ENCODE measurements at regions of chr3 and their contacts with region 1.

Region 1: GRCh38 chr3:194930377-194931204 is 244.9 kb downstream of the FAM43A start:
- DNase-seq: no peak

Region 2: DNA sequence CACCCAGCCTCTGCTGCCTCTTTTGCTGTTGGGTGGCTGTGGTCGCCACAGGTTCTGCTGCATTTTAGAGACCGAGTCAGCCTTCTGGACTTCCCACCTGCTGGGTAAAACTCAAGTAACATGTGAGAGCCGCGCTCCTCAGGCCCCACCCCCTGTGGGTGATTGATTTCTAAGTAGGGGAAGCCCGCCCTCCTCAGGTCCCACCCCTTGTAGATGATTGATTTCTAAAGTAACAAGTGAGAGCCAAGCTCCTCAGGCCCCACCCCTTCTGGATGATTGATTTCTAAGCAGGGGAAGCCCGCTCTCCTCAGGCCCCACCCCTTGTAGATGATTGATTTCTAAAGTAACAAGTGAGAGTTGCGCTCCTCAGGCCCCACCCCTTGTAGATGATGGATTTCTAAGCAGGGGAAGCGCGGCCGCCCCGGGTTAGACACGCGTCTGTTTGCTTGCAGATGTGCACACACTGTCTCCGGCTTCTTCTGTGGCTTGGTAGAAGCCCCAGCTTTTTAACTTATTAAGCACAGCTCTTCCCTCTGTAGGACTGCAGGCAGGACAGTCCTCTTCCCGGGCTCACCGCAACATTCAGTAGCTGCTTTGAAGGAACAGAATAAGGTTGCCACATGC is 161.5 kb before region 1 on chr3:
- intact Hi-C with region 1: loop called (anchors 5 kb)
- DNase-seq: peak; percentile 92

Region 3: DNA sequence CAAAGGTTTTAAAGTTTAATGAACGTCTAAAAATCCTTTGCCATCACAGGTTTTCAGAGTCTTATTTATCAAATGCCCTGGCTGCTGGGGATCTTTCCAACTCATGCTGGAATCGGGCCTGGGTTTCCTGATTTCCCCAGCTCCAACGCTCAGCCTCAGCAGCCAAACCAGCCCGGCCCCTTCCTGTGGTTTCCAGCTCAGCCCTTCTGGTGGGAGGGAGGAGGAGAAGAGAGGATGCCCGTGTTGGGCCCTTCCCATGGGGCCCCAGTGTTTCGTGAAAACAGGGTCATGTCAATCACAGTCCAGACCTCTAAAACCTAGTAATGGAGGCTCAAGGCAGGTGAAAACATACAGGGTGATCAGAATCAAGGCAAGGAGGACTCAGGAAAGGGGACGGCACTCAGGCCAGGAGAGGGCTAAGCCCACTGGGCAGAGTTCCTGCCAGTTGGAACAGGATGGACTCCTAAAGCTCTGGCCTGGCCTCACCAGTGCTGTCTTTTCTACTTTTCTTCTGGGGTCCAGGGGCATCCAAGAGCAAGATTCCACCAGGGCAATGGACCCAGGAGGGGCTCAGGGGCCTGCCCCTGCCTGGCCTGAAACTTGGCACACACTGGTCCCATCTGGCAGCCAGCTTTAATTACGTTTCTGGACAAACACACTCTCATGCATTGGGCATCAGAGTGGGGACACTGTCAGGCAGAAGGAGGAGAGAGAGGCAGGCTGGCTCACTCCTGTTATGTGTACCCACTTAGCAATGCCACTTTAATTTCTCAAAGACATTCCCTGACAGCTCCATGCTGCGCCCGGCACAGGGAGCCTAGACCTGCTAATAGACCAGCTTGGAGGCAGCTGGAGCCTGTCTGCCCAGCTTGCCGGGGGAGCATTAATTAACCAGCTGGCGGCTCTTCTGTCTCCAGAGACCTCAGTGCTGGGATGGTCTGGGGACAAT is 50.3 kb before region 1 on chr3:
- intact Hi-C with region 1: loop called (anchors 2 kb)
- DNase-seq: peak; percentile 86

Region 4: GRCh38 chr3:196227629-196228493 is 1297.3 kb after region 1 on chr3:
- intact Hi-C with region 1: no loop called
- DNase-seq: no peak

Measured in cardiac septum (tissue), 1 donor.